ENCODE measurements at regions of chr12 and their contacts with region 1.

Region 1: GRCh38 chr12:2129076-2129475 is 76.3 kb downstream of the CACNA1C start:
- DNase-seq: peak; percentile 15
- H3K4me3 ChIP-seq: no peak overlapping the region
- H3K27ac ChIP-seq: peak overlapping the region; percentile 52
- H3K27me3 ChIP-seq: no peaks in the 10 kb centered on the region
- CTCF ChIP-seq: no peak

Region 2: GRCh38 chr12:2163172-2163941 is 34.3 kb after region 1 on chr12:
- CTCF ChIA-PET with region 1: no interaction called
- POLR2A ChIA-PET with region 1: interaction called, 11 read pairs
- DNase-seq: peak; percentile 95
- H3K4me3 ChIP-seq: no peak overlapping the region
- H3K27ac ChIP-seq: peak overlapping the region; percentile 87
- H3K27me3 ChIP-seq: no peaks in the 10 kb centered on the region
- CTCF ChIP-seq: 0 out of 2 replicates have a peak, but pooled peaks have one; percentile 12

Measured in AG04450 (cell line).